Activated CD4-positive, alpha-beta memory T cell treated with anti-CD3 and anti-CD28 coated beads for 36 hours (primary cell): ENCODE measurements at regions of chrX and their contacts with region 1.

Region 1: DNA sequence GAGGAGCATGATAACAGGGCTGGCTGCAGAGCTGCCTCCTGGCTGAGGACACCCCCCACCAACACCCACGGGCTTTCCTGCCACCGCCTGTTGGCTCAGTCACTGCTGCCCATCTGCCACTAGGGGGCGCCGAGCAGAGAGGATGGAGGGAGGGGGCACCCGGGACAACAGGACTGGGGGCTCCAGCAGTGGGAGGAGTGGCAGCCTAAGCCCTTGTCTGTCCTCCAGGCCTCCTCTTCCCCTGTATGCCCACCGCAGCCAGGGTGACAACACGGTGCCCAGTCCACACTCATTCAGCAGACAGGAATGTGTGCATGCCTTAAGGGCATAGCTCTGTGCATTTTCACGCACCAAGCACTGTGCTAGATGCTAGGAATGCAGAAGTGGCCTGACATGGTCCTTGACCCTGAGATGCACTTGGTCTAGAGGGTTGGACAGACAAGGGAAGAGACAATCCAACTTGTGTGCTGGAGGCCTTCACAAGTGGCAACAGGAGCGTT is 149.9 kb downstream of the AMMECR1 start:
- DNase-seq: peak; percentile 63
- H3K4me3 Mint-ChIP-seq: no peak overlapping the region
- H3K27ac Mint-ChIP-seq: no peak overlapping the region
- H3K4me1 Mint-ChIP-seq: peaks cover 9% of the 10 kb centered on the region
- H3K27me3 Mint-ChIP-seq: no peaks in the 10 kb centered on the region

Region 2: GRCh38 chrX:110412971-110413721 is 245.1 kb after region 1 on chrX:
- CTCF ChIA-PET with region 1: interaction called, 522 read pairs
- POLR2A ChIA-PET with region 1: no interaction called
- intact Hi-C with region 1: no loop called
- DNase-seq: peak; percentile 76
- H3K4me3 Mint-ChIP-seq: no peak overlapping the region
- H3K27ac Mint-ChIP-seq: no peak overlapping the region
- H3K4me1 Mint-ChIP-seq: peaks cover 3% of the 10 kb centered on the region
- H3K27me3 Mint-ChIP-seq: no peaks in the 10 kb centered on the region